ENCODE measurements at regions of chr3 and their contacts with region 1.

Region 1: GRCh38 chr3:196192036-196192523 is 19.1 kb downstream of the ZDHHC19 start:
- DNase-seq: no peak
- H3K4me3 Mint-ChIP-seq: no peak overlapping the region
- H3K27ac Mint-ChIP-seq: peak overlapping the region; percentile 94
- H3K4me1 Mint-ChIP-seq: peaks cover 27% of the 10 kb centered on the region
- H3K27me3 Mint-ChIP-seq: no peaks in the 10 kb centered on the region

Region 2: GRCh38 chr3:196073188-196073838 is 118.8 kb before region 1 on chr3:
- intact Hi-C with region 1: loop called (anchors 1 kb)
- DNase-seq: peak; percentile 61
- H3K4me3 Mint-ChIP-seq: no peak overlapping the region
- H3K27ac Mint-ChIP-seq: peak overlapping the region; percentile 31
- H3K4me1 Mint-ChIP-seq: peaks cover 35% of the 10 kb centered on the region
- H3K27me3 Mint-ChIP-seq: no peaks in the 10 kb centered on the region

Region 3: DNA sequence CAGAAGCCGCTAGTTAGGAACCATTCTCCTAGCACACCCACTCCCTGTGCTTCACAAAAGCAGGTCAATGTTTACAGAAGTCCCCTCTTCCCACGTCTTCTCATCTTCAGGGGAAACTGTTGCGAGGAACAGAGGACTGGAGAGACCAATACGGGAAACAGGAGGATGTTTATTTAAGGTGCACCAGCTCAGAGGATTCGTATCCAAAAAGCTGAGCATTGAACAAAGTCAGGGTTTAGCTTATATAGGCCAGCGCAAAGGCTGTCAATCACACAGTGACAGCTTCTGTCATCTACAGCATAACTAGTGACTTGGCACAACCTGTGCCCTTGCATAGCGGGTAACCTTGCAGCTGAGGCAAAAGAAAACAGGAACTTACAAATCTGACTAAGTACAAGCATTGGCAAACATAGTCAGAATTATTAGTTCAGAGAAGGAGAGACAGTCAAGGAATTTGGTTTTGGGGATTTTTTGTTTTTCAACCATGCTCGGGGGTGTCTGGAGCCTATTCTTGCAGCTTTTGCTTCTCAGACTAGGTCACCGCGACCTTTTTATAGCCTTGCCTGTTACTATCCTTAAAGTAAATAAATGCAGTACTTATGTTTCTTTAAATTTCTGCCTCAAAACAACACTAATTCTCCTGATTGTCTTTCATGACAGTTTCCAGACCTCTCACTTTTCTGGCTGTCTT is 42.1 kb before region 1 on chr3:
- intact Hi-C with region 1: no loop called
- DNase-seq: no peak
- H3K4me3 Mint-ChIP-seq: no peak overlapping the region
- H3K27ac Mint-ChIP-seq: no peak overlapping the region
- H3K4me1 Mint-ChIP-seq: peaks cover 4% of the 10 kb centered on the region
- H3K27me3 Mint-ChIP-seq: peaks cover 3% of the 10 kb centered on the region

Measured in activated T-helper 2 cell treated with anti-CD3 and anti-CD28 coated beads, Interferon-gamma antibody, Interleukin-2, Interleukin-4, amounts not matched to agents 10 μg/mL and 5 μg/mL and 100 μg/mL, durations not matched to agents 14 hours and 24 hours and 36 hours (primary cell).